ENCODE measurements at regions of chr4 and their contacts with region 1.

Region 1: GRCh38 chr4:128060699-128061565 is at the start of gene LARP1B:
- DNase-seq: peak; percentile 83 to 99 (median 94)

Region 2: DNA sequence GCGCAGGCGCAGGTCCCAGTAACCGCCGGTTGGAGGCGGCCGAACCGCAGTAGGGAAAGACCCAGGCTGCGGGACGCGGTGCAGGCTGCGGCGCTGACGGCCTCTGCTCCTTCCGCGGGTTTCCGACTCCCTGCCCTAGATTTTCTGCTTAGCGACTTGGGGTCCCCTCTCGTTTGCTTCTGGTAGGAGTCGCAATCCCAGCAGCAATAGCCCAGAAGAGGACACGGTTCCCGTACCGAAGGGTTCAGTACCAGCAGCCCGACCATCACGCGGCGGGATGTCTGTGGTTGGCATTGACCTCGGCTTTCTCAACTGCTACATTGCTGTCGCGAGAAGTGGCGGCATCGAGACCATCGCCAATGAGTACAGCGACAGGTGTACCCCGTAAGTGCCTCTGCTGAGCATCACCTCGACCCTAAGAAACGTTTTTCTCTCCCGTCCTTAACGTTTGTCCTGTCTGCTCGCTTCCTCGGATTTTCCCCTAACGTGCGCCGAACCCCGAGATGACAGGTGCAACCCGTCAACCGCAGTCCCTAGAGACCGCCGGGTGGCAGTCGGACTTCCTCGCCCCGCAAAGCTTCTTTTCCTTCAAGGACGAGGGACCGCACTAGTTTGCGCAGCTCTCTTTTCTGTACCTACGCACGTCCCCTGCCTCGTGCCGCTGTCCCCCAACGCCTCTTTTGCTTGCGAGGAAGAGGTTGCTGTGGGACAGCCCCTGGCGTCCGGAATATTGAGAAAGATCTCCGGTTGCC is 278.5 kb before region 1 on chr4 and contains the start of gene HSPA4L:
- intact Hi-C with region 1: loop called (anchors 10 kb)
- DNase-seq: peak in 9 of 10 donors; percentile 34 to 91 (median 54)

Region 3: GRCh38 chr4:127880764-127881562 is 180.0 kb before region 1 on chr4 and contains the start of gene PLK4:
- intact Hi-C with region 1: loop called (anchors 5 kb)
- DNase-seq: peak; percentile 86 to 99 (median 92)

Region 4: GRCh38 chr4:127965062-127965802 is 95.7 kb before region 1 on chr4 and contains the starts of genes ABHD18 and MFSD8:
- intact Hi-C with region 1: loop called (anchors 2 kb)
- DNase-seq: peak; percentile 85 to 99 (median 94)

Region 5: GRCh38 chr4:128675083-128675482 is 614.2 kb after region 1 on chr4:
- intact Hi-C with region 1: no loop called
- DNase-seq: no peak